SK-N-SH (cell line): ENCODE measurements at regions of chr7 and their contacts with region 1.

Region 1: GRCh38 chr7:23467806-23468516 is 2.3 kb downstream of the IGF2BP3 start:
- DNase-seq: peak; percentile 48
- H3K4me3 ChIP-seq: peak overlapping the region; percentile 88 to 89
- H3K27ac ChIP-seq: peak overlapping the region; percentile 93 to 96
- H3K4me1 ChIP-seq: peaks cover 29 to 44% of the 10 kb centered on the region in 2 experiments
- H3K27me3 ChIP-seq: no peaks in the 10 kb centered on the region
- CTCF ChIP-seq: no peak
- EP300 ChIP-seq: no peak
- RAD21 ChIP-seq: no peak

Region 2: GRCh38 chr7:23490357-23491135 is 22.6 kb after region 1 on chr7:
- CTCF ChIA-PET with region 1: interaction called, 13 read pairs
- POLR2A ChIA-PET with region 1: interaction called, 7 read pairs
- DNase-seq: peak; percentile 98
- H3K4me3 ChIP-seq: peak overlapping the region; percentile 56 to 74
- H3K27ac ChIP-seq: peak overlapping the region; percentile 80 to 90
- H3K4me1 ChIP-seq: peaks cover 4 to 7% of the 10 kb centered on the region in 2 experiments; a peak in 3 of 4 replicates
- H3K27me3 ChIP-seq: no peaks in the 10 kb centered on the region
- CTCF ChIP-seq: no peak
- EP300 ChIP-seq: no peak
- RAD21 ChIP-seq: no peak

Region 3: DNA sequence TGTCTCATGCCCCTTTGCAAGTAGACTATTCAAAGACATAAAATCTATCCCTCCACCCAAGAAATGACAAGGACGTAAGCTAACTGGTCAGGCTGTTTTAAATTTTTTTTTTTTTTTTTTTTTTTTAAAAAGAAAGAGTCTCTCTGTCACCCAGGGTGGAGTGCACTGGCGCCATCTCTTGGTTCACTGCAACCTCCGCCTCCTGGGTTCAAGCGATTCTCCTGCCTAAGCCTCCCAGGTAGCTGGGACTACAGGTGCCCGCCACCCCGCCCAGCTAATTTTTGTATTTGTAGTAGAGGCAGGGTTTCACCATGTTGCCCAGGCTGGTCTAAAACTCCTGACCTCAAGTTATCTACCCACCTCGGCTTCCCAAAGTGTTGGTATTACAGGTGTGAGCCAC is 52.6 kb after region 1 on chr7:
- CTCF ChIA-PET with region 1: interaction called, 11 read pairs
- POLR2A ChIA-PET with region 1: no interaction called
- DNase-seq: no peak
- H3K4me3 ChIP-seq: no peak overlapping the region
- H3K27ac ChIP-seq: no peak overlapping the region
- H3K4me1 ChIP-seq: peaks cover 0 to 13% of the 10 kb centered on the region in 2 experiments; a peak in 3 of 4 replicates
- H3K27me3 ChIP-seq: no peaks in the 10 kb centered on the region
- CTCF ChIP-seq: peak; percentile 53
- EP300 ChIP-seq: no peak
- RAD21 ChIP-seq: peak; percentile 47